ENCODE measurements at regions of chr1 and their contacts with region 1.

Region 1: GRCh38 chr1:36109041-36109679 is 15.9 kb downstream of the COL8A2 start:
- DNase-seq: peak; percentile 34 to 79 (median 60)
- ATAC-seq: peak; percentile 99
- H3K4me3 Mint-ChIP-seq: peak overlapping the region; percentile 36 to 88 (median 75)
- H3K27ac Mint-ChIP-seq: peak overlapping the region; percentile 89 to 97 (median 94)
- H3K4me1 Mint-ChIP-seq: peaks cover 26 to 55% (median 43%) of the 10 kb centered on the region in 4 donors
- H3K27me3 Mint-ChIP-seq: no peaks in the 10 kb centered on the region

Region 2: DNA sequence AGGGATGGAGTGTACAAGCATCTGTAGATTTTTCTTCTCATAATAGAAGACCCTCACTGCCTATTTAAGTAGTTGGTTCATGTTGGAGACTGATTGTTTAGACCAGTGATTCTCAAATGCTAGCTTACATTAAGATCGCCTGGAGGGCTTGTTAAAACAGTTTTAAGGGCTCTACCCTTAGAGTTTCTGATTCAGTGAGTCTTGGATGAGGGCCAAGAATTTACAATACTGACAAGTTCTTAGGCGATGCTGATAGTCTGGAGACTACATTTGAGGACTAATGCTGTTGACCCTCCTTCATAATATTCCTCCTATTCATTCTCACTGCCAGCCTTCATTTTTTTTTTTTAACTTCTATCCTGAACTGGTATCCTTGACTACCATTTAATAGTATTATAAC is 193.5 kb before region 1 on chr1:
- POLR2A ChIA-PET with region 1: no interaction called
- DNase-seq: no peak
- ATAC-seq: no peak
- H3K4me3 Mint-ChIP-seq: no peak overlapping the region
- H3K27ac Mint-ChIP-seq: no peak overlapping the region
- H3K4me1 Mint-ChIP-seq: peaks cover 0 to 1% (median 0%) of the 10 kb centered on the region in 4 donors
- H3K27me3 Mint-ChIP-seq: no peaks in the 10 kb centered on the region

Region 3: DNA sequence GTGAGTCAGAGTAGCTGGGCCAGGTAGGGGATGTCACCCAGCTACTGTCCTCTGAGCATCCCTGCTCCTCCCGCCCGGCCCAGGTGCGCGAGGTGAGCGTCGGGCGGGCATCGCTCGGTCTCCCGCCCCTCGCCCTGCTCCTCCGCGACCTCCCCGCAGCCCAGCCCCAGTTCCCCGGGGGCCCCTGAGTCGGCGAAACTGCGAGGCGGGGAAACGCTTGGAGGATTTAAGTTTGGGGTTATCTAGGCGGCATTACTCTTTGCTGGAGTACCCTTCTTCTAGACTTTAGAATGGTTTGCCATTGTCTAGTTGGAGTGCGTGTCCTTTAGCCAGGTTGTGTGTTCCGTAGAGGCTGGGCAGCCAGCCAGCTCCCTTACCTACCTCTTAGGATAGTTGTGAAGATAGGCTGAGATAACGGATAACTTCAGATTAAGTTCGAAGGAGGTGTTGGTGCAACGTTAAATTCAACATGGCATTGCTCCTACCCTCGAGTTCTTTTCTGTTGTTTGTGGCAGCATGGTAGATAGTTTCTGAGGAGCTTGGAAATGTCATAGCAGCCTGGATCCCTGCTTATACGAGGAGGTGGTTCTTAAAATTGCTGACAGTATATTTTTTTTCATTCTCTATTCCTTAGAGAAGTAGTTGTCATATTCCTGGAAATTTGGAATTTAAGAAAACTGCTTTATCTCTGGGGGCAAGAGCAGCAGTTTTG is 177.6 kb before region 1 on chr1:
- POLR2A ChIA-PET with region 1: no interaction called
- DNase-seq: peak in 2 of 10 donors; percentile 1 to 3
- ATAC-seq: no peak
- H3K4me3 Mint-ChIP-seq: peak overlapping the region; percentile 86 to 95 (median 92)
- H3K27ac Mint-ChIP-seq: peak overlapping the region; percentile 89 to 98 (median 95)
- H3K4me1 Mint-ChIP-seq: peaks cover 6 to 47% (median 37%) of the 10 kb centered on the region in 4 donors
- H3K27me3 Mint-ChIP-seq: no peaks in the 10 kb centered on the region

Region 4: GRCh38 chr1:36123356-36123755 is 14.2 kb after region 1 on chr1:
- POLR2A ChIA-PET with region 1: interaction called, 35 read pairs
- DNase-seq: peak in 2 of 10 donors; percentile 22 to 29
- ATAC-seq: peak; percentile 65 to 70
- H3K4me3 Mint-ChIP-seq: peak overlapping the region; percentile 10 to 79 (median 64)
- H3K27ac Mint-ChIP-seq: peak overlapping the region in 8 of 10 donors; percentile 7 to 83 (median 43)
- H3K4me1 Mint-ChIP-seq: peaks cover 29 to 47% (median 37%) of the 10 kb centered on the region in 4 donors
- H3K27me3 Mint-ChIP-seq: peaks cover 19 to 40% (median 30%) of the 10 kb centered on the region in 5 donors

Region 5: GRCh38 chr1:36134505-36135329 is 25.6 kb after region 1 on chr1:
- POLR2A ChIA-PET with region 1: interaction called, 44 read pairs
- DNase-seq: peak in 7 of 10 donors; percentile 36 to 76 (median 49)
- ATAC-seq: peak; percentile 52 to 89
- H3K4me3 Mint-ChIP-seq: no peak overlapping the region
- H3K27ac Mint-ChIP-seq: peak overlapping the region; percentile 29 to 79 (median 70)
- H3K4me1 Mint-ChIP-seq: peaks cover 6 to 15% (median 9%) of the 10 kb centered on the region in 4 donors
- H3K27me3 Mint-ChIP-seq: no peaks in the 10 kb centered on the region

Region 6: GRCh38 chr1:36155408-36156328 is 46.5 kb after region 1 on chr1 and contains the start of gene MAP7D1:
- POLR2A ChIA-PET with region 1: interaction called, 11 read pairs
- DNase-seq: peak; percentile 75 to 98 (median 82)
- ATAC-seq: peak; percentile 68 to 79
- H3K4me3 Mint-ChIP-seq: peak within 1 kb of the TSS; percentile 85 to 95 (median 93)
- H3K27ac Mint-ChIP-seq: peak within 1 kb of the TSS; percentile 93 to 99 (median 95)
- H3K4me1 Mint-ChIP-seq: peaks cover 41 to 83% (median 75%) of the 10 kb centered on the region in 4 donors
- H3K27me3 Mint-ChIP-seq: no peaks in the 10 kb centered on the region
- polyA plus RNA-seq, gene MAP7D1: 13.3 to 67.1 (median 20.1) TPM